OCI-LY7 (cell line): ENCODE measurements at regions of chr5 and their contacts with region 1.

Region 1: GRCh38 chr5:136062366-136063274 is 33.8 kb downstream of the TGFBI start:
- DNase-seq: peak; percentile 89
- H3K4me3 ChIP-seq: no peak overlapping the region
- H3K27ac ChIP-seq: no peak overlapping the region
- H3K4me1 ChIP-seq: peaks cover 18% of the 10 kb centered on the region
- CTCF ChIP-seq: peak; percentile 98

Region 2: DNA sequence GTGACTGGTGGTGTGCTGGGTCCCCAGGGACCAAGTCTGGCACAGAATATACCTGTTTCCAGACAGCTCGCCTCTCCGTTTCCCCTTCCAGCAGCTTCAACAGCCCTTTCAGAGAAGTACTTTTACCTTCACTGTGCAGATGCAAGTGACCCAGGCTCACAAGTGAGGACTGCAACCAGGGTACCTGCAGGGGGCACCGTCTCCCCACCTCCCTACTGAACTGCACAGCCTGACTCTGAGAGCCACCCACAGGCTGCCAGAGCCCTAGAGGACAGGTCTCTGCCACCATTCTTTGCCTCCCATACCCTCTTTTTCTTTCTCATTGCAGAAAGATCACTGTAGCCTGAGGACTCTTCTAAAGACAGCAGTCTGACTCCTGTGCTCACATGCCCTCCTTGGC is 182.3 kb before region 1 on chr5:
- CTCF ChIA-PET with region 1: no interaction called
- POLR2A ChIA-PET with region 1: no interaction called
- intact Hi-C with region 1: no loop called
- DNase-seq: peak; percentile 40
- H3K4me3 ChIP-seq: no peak overlapping the region
- H3K27ac ChIP-seq: no peak overlapping the region
- H3K4me1 ChIP-seq: no peaks in the 10 kb centered on the region
- CTCF ChIP-seq: peak; percentile 72

Region 3: GRCh38 chr5:135944967-135945560 is 117.6 kb before region 1 on chr5:
- CTCF ChIA-PET with region 1: interaction called, 3 read pairs
- POLR2A ChIA-PET with region 1: no interaction called
- intact Hi-C with region 1: loop called (anchors 1 kb)
- DNase-seq: peak; percentile 84
- H3K4me3 ChIP-seq: no peak overlapping the region
- H3K27ac ChIP-seq: no peak overlapping the region
- H3K4me1 ChIP-seq: no peaks in the 10 kb centered on the region
- CTCF ChIP-seq: peak; percentile 95

Region 4: DNA sequence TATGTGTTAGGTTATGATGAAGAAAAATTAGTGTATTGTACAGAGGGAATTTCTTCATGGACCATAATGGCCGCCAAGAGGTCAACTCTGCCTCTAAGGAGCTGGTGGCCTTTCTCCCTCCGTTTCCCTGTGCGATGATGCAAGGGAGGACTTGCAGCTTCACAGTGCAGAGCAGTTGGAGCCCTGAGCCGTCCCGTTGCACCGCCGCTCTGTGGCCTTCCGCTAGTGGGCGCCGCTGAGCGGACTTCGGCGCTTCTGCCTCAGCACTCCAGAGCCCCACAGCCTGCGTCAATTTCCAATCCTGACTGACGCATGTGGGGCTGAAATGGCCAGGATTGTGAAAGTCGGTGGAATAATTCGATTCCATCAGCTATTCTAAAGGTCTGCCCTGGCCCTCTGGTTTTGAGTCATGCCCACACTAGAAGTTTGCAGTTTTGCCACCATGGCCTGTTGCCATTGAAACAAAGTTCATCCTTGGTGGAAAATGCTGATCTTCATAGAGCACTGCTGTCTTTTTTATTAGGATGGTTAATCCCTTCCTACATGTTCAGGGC is 85.2 kb before region 1 on chr5:
- CTCF ChIA-PET with region 1: no interaction called
- POLR2A ChIA-PET with region 1: no interaction called
- intact Hi-C with region 1: loop called (anchors 1 kb)
- DNase-seq: peak; percentile 29
- H3K4me3 ChIP-seq: no peak overlapping the region
- H3K27ac ChIP-seq: no peak overlapping the region
- H3K4me1 ChIP-seq: no peaks in the 10 kb centered on the region
- CTCF ChIP-seq: peak; percentile 88

Region 5: DNA sequence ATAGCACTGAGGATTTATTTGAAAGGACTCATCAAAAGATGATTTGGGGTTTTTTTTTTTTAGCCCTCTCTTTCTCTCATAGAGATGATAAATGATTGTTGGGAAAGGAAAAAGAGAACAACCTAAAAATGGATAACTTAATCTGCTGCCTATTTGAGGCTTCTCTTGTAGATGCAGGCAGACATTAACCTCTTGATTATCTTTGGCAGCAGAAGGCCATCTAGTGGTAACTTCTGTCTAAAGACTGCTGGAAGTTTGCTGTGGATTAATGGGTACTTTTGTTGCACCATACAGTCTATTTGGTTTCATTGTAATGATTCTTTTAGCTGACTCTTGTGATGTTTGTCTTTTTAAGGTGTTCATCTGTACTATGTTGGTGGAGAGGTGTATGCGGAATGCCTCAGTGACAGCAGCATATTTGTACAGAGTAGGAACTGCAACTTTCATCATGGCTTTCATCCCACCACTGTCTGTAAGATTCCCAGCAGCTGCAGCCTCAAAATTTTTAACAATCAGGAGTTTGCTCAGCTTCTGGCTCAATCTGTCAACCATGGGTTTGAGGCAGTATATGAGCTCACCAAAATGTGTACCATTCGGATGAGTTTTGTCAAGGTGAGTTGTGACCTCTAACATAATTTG is 111.5 kb after region 1 on chr5:
- CTCF ChIA-PET with region 1: interaction called, 4 read pairs
- POLR2A ChIA-PET with region 1: interaction called, 3 read pairs
- intact Hi-C with region 1: loop called (anchors 1 kb)
- DNase-seq: peak; percentile 76
- H3K4me3 ChIP-seq: no peak overlapping the region
- H3K27ac ChIP-seq: peak overlapping the region; percentile 24
- H3K4me1 ChIP-seq: peaks cover 34% of the 10 kb centered on the region
- CTCF ChIP-seq: peak; percentile 94

Region 6: DNA sequence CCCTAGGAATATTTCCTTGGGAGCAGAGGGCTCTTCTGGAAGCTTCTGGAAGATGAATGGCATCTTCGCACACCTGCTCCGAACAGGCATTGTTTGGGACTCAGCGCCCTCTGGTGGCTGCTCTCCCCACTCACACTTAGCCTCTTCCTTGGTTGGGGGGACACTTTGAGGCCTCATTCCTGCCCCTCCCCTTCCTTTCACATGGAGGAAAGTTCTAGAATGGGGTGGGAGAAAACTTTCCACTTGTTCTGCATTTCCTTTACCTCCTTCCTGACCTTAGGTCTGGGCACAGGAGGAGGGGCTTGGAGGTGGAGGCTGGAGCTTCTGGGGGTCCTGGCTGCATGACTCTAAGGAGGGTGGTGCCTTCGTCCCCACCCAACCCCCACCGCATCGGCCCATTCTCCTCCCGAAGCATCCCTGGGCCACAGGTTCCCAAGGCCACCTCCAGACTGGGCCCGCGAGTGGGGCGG is 149.7 kb after region 1 on chr5:
- CTCF ChIA-PET with region 1: no interaction called
- POLR2A ChIA-PET with region 1: no interaction called
- intact Hi-C with region 1: loop called (anchors 1 kb)
- DNase-seq: peak; percentile 57
- H3K4me3 ChIP-seq: no peak overlapping the region
- H3K27ac ChIP-seq: no peak overlapping the region
- H3K4me1 ChIP-seq: no peaks in the 10 kb centered on the region
- CTCF ChIP-seq: peak; percentile 98